ENCODE measurements at regions of chr4 and their contacts with region 1.

Region 1: GRCh38 chr4:48963042-48963679 is 22.9 kb upstream of the CWH43 start:
- DNase-seq: peak; percentile 22 to 80
- ATAC-seq: peak; percentile 62 to 88 (median 80)
- H3K4me3 ChIP-seq: no peak overlapping the region
- H3K27ac ChIP-seq: no peak overlapping the region
- H3K4me1 ChIP-seq: no peaks in the 10 kb centered on the region
- H3K27me3 ChIP-seq: no peaks in the 10 kb centered on the region
- CTCF ChIP-seq: peak; percentile 88 to 99 (median 96)

Region 2: GRCh38 chr4:48445704-48446103 is 517.5 kb before region 1 on chr4:
- intact Hi-C with region 1: loop called in 5 of 10 experiments (anchors 2 to 10 kb)
- DNase-seq: no peak
- ATAC-seq: no peak
- H3K4me3 ChIP-seq: no peak overlapping the region
- H3K27ac ChIP-seq: no peak overlapping the region
- H3K4me1 ChIP-seq: no peaks in the 10 kb centered on the region
- H3K27me3 ChIP-seq: no peaks in the 10 kb centered on the region
- CTCF ChIP-seq: peak; percentile 37 to 75 (median 63)

Region 3: DNA sequence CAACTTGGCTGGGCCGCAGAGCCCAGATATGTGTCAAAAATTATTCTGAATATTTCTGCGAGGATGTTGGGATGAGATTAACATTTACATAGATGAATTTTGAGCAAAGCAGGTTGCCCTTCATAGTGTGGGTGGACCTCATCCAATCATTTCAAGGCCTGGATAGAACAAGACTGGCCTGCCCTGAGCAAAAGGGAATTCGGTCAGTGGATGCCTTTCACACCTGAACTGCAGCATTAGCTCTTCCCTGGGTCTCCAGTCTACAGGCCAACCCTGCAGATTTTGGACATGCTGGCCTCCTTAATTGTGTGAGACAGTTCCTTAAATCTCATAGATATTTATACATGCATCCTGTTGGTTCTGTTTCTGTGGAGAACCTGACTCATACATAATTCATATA is 512.4 kb before region 1 on chr4:
- intact Hi-C with region 1: loop called in 5 of 10 experiments (anchors 2 to 10 kb)
- DNase-seq: no peak
- ATAC-seq: no peak
- H3K4me3 ChIP-seq: no peak overlapping the region
- H3K27ac ChIP-seq: no peak overlapping the region
- H3K4me1 ChIP-seq: no peaks in the 10 kb centered on the region
- H3K27me3 ChIP-seq: no peaks in the 10 kb centered on the region
- CTCF ChIP-seq: no peak

Region 4: DNA sequence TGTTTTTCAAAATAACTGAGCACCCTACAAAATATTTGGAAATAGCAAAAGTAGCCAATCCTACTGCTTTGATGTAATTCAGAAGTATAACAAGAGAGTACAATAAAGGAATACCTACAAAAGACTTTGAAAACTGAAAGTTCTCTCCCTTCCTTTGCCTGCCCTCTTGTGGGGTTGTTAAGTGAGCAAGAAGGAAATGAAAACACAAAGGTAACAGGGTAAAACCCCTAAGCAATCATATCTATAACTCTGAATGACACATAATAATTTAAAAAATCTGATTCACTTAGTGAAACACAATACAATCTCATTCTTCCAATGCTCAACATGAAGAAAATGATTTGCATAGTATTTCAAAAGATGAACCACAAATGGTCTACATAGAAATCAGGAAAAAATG is 281.3 kb before region 1 on chr4:
- intact Hi-C with region 1: loop called in 1 of 10 experiments (anchors 10 kb)
- DNase-seq: no peak
- ATAC-seq: peak in 4 of 8 donors; percentile 44 to 70 (median 58)
- H3K4me3 ChIP-seq: no peak overlapping the region
- H3K27ac ChIP-seq: peak overlapping the region in 1 of 10 donors; percentile 19
- H3K4me1 ChIP-seq: peaks cover 0 to 45% (median 17%) of the 10 kb centered on the region in 9 donors
- H3K27me3 ChIP-seq: no peaks in the 10 kb centered on the region
- CTCF ChIP-seq: peak; percentile 25 to 74 (median 47)

Region 5: DNA sequence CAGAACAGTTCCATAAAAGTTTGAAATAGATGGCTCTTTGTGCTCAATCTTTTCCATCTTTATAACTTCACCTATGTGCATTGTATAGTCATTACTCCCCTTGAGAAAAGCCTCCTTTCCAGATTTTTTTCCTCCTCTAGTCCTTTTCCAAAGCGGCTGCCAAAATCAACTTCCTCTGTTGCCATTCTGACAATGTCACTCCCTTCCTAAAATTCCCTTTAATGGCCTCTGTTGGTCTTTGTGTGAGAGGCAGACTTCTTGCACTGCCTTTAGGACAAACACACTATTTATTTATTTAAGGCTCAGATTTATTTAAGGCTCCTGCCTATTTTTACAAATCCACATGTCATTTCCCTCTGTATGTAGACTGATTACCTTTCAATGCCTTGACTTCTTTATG is 161.4 kb before region 1 on chr4:
- intact Hi-C with region 1: no loop called
- DNase-seq: peak in 1 of 2 donors; percentile 75
- ATAC-seq: peak; percentile 55 to 94 (median 84)
- H3K4me3 ChIP-seq: no peak overlapping the region
- H3K27ac ChIP-seq: peak overlapping the region in 9 of 10 donors; percentile 38 to 87 (median 69)
- H3K4me1 ChIP-seq: peaks cover 0 to 57% (median 20%) of the 10 kb centered on the region in 9 donors
- H3K27me3 ChIP-seq: no peaks in the 10 kb centered on the region
- CTCF ChIP-seq: no peak

Region 6: DNA sequence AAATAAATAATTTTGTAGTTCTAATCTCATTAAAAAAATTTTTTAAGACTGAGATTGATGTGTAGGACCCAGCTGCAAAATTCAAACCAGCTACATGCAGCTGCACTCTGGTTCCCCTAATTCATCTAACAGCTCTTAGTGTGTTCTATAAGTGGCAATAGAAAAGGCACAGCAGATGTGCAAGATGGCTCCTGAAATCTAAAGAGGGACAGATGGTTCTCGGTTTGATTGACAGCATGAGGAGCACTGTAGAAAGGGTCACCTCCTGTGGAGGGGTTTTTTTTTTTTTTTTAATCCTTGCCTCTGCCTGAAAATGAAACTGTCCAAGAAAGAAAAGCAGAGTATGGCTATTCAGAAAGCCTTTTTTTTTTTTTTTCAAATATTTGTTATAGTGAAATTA is 149.2 kb before region 1 on chr4:
- intact Hi-C with region 1: no loop called
- DNase-seq: no peak
- ATAC-seq: no peak
- H3K4me3 ChIP-seq: no peak overlapping the region
- H3K27ac ChIP-seq: no peak overlapping the region
- H3K4me1 ChIP-seq: no peaks in the 10 kb centered on the region
- H3K27me3 ChIP-seq: peaks cover 0 to 4% (median 0%) of the 10 kb centered on the region in 7 donors
- CTCF ChIP-seq: no peak

Region 7: DNA sequence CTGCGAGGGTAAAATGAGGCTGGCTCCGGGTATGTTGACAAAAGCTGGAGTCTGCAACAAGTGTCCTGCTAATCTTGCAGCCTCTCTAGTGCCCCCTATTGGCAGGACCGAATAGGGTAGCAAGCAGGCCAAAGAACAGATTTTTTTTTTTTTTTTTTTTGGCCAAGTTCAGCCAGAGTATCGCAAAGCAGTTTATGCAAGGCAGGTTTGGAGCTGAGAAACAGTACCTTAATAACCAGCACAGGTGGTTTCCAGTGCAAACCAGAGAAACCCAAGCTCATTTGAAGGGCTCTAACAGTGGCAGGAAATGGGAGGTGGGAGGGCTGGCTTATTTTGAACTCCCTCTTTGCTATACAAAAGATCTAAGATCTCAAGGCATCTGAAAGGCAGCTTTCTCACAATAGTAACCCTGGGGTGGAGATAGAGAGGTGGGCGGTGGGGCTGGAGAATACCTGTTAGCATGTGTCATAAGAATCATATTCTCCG is 18.4 kb before region 1 on chr4:
- intact Hi-C with region 1: no loop called
- DNase-seq: no peak
- ATAC-seq: no peak
- H3K4me3 ChIP-seq: no peak overlapping the region
- H3K27ac ChIP-seq: no peak overlapping the region
- H3K4me1 ChIP-seq: peaks cover 0 to 3% (median 0%) of the 10 kb centered on the region in 9 donors
- H3K27me3 ChIP-seq: no peaks in the 10 kb centered on the region
- CTCF ChIP-seq: peak in 5 of 9 donors; percentile 14 to 40 (median 22)

Region 8: GRCh38 chr4:49032440-49033161 is 69.4 kb after region 1 on chr4:
- intact Hi-C with region 1: no loop called
- DNase-seq: no peak
- ATAC-seq: no peak
- H3K4me3 ChIP-seq: no peak overlapping the region
- H3K27ac ChIP-seq: no peak overlapping the region
- H3K4me1 ChIP-seq: no peaks in the 10 kb centered on the region
- H3K27me3 ChIP-seq: peaks cover 0 to 22% (median 0%) of the 10 kb centered on the region in 7 donors
- CTCF ChIP-seq: peak; percentile 18 to 73 (median 55)